Activated B cell treated with CpG ODN at 0.5 μM for 24 hours (primary cell): ENCODE measurements at regions of chr4 and their contacts with region 1.

Region 1: GRCh38 chr4:26583865-26584652 is at the start of gene TBC1D19:
- DNase-seq: peak; percentile 82
- ATAC-seq: peak; percentile 96
- H3K4me3 Mint-ChIP-seq: peak within 1 kb of the TSS; percentile 96
- H3K27ac Mint-ChIP-seq: peak within 1 kb of the TSS; percentile 93
- H3K4me1 Mint-ChIP-seq: peaks cover 24% of the 10 kb centered on the region
- H3K27me3 Mint-ChIP-seq: peaks cover under 1% of the 10 kb centered on the region
- CTCF ChIP-seq: no peak
- total RNA-seq, gene TBC1D19: 5.2 and 6.7 TPM in 2 replicates

Region 2: DNA sequence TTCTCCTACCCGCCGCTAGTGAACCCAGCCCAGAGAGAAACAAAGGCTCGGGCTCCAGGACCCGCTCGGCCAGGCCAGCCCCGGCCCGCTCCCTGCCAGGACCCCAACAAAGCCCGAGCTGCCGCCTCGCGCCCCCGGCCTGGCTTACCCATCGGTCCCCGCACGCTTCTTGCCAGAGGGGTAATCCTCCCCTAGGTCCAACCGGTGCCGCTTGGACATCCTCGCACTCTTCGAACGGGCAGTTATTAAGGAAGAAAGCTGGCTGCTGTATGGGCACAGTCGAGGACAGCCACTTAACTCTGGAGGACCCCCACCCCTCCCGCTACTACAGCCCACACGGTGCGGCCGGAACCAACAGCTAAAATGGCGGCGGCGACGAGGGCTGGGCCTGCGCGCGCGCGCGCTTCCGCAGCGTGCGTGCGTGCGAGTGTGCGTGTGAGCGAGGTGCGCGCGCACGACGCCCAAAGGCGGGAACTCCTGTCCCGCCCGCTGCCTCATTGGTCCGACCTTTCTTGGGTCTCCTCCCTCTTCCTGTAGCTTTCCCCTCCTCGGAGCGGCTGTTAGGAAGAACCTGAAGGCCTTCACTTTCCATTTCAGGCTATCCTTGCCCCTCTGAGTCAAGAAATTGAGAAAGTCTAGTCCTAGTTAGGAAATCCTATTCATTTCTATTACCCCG is 1999.7 kb before region 1 on chr4 and contains the start of gene DHX15:
- CTCF ChIA-PET with region 1: no interaction called
- POLR2A ChIA-PET with region 1: no interaction called
- intact Hi-C with region 1: loop called (anchors 5 kb)
- DNase-seq: peak; percentile 88
- ATAC-seq: peak; percentile 93
- H3K4me3 Mint-ChIP-seq: peak within 1 kb of the TSS; percentile 98
- H3K27ac Mint-ChIP-seq: peak within 1 kb of the TSS; percentile 91
- H3K4me1 Mint-ChIP-seq: peaks cover 39% of the 10 kb centered on the region
- H3K27me3 Mint-ChIP-seq: no peaks in the 10 kb centered on the region
- CTCF ChIP-seq: no peak
- total RNA-seq, gene DHX15: 145 and 163 TPM in 2 replicates

Region 3: GRCh38 chr4:25234390-25235370 is 1349.4 kb before region 1 on chr4:
- CTCF ChIA-PET with region 1: no interaction called
- POLR2A ChIA-PET with region 1: no interaction called
- intact Hi-C with region 1: loop called (anchors 5 kb)
- DNase-seq: no peak
- ATAC-seq: peak; percentile 53
- H3K4me3 Mint-ChIP-seq: peak overlapping the region; percentile 90
- H3K27ac Mint-ChIP-seq: peak overlapping the region; percentile 95
- H3K4me1 Mint-ChIP-seq: peaks cover 47% of the 10 kb centered on the region
- H3K27me3 Mint-ChIP-seq: no peaks in the 10 kb centered on the region
- CTCF ChIP-seq: no peak

Region 4: DNA sequence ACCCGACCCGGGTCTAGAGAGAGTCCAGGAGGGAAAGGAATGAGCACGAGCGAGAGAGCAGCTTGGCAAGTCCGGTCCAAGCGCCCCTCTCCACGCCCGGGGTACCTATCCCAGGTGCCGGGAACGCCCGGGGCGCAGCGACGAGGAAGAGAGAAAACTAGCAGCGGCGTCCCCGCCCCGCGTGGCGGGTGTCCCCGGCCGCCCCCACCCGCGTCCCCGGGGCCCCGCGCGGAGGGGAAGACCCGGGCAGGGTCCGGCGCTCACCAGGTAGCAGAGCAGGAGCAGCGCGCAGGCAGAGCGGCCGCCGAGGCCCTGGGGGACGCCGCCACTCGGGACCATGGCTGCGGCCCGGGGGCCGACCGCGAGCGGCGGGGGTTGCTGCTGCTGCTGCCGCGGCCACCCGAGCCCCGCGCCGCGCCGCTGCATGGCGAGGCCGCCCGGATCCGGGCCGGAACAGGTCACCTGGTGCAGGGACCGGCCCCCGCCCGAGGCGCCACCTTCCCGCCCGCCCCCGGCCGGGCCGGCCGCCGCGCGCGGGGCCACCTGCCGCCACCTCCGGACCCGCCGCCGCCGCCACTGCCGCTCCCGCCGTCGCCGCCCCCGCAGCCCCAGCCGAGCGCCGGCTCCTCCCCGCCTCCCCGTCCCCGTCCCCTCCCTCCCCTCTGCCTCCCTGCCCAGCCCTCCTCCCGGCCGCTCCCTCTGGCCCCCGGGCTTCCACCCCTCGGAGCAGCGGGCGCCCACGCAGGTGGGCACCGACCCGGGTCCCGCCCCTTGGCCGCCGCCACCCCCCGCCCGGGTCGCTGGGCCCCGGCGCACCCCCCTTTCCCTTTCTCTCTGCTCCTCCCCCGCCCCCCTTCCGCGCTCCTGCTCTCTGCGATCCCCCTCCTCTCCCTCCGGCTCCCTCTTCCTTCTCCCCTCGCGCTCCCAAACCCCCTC is 721.4 kb before region 1 on chr4 and contains the start of gene SEL1L3:
- CTCF ChIA-PET with region 1: no interaction called
- POLR2A ChIA-PET with region 1: no interaction called
- intact Hi-C with region 1: loop called (anchors 2 kb)
- DNase-seq: peak; percentile 68
- ATAC-seq: peak; percentile 39
- H3K4me3 Mint-ChIP-seq: peak within 1 kb of the TSS; percentile 98
- H3K27ac Mint-ChIP-seq: peak within 1 kb of the TSS; percentile 99
- H3K4me1 Mint-ChIP-seq: peaks cover 84% of the 10 kb centered on the region
- H3K27me3 Mint-ChIP-seq: no peaks in the 10 kb centered on the region
- CTCF ChIP-seq: no peak
- total RNA-seq, gene SEL1L3: 102 and 113 TPM in 2 replicates

Region 5: GRCh38 chr4:25986807-25987206 is 597.3 kb before region 1 on chr4:
- CTCF ChIA-PET with region 1: no interaction called
- POLR2A ChIA-PET with region 1: no interaction called
- intact Hi-C with region 1: loop called (anchors 5 kb)
- DNase-seq: no peak
- ATAC-seq: no peak
- H3K4me3 Mint-ChIP-seq: no peak overlapping the region
- H3K27ac Mint-ChIP-seq: no peak overlapping the region
- H3K4me1 Mint-ChIP-seq: peaks cover 16% of the 10 kb centered on the region
- H3K27me3 Mint-ChIP-seq: peaks cover 3% of the 10 kb centered on the region
- CTCF ChIP-seq: no peak

Region 6: GRCh38 chr4:26466578-26467270 is 117.3 kb before region 1 on chr4:
- CTCF ChIA-PET with region 1: no interaction called
- POLR2A ChIA-PET with region 1: no interaction called
- intact Hi-C with region 1: no loop called
- DNase-seq: no peak
- ATAC-seq: no peak
- H3K4me3 Mint-ChIP-seq: no peak overlapping the region
- H3K27ac Mint-ChIP-seq: no peak overlapping the region
- H3K4me1 Mint-ChIP-seq: no peaks in the 10 kb centered on the region
- H3K27me3 Mint-ChIP-seq: peaks cover 12% of the 10 kb centered on the region
- CTCF ChIP-seq: no peak

Region 7: GRCh38 chr4:26542991-26543390 is 41.1 kb before region 1 on chr4:
- CTCF ChIA-PET with region 1: no interaction called
- POLR2A ChIA-PET with region 1: no interaction called
- intact Hi-C with region 1: no loop called
- DNase-seq: no peak
- ATAC-seq: no peak
- H3K4me3 Mint-ChIP-seq: no peak overlapping the region
- H3K27ac Mint-ChIP-seq: no peak overlapping the region
- H3K4me1 Mint-ChIP-seq: no peaks in the 10 kb centered on the region
- H3K27me3 Mint-ChIP-seq: peaks cover 2% of the 10 kb centered on the region
- CTCF ChIP-seq: no peak

Region 8: DNA sequence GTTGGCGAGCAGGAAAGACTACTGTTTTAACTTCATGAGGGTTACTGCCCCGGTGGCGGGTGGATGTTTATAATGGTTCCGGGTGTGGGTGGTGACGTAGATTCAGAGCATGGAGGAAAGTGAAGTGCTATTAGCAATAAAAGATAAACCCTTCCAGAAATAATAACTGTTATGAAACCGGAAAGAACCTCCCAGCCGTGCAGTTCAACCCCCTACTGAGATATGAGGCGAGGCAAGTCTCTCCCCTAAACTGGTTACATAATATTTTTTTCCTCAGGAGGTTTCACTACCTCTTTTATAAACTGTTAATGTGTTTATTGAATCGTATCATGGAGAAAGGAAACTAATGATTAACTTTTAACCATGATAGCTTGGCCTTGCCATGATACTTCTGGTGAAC is 242.7 kb after region 1 on chr4:
- CTCF ChIA-PET with region 1: no interaction called
- POLR2A ChIA-PET with region 1: interaction called, 6 read pairs
- intact Hi-C with region 1: loop called (anchors 2 kb)
- DNase-seq: peak; percentile 47
- ATAC-seq: peak; percentile 84
- H3K4me3 Mint-ChIP-seq: peak overlapping the region; percentile 59
- H3K27ac Mint-ChIP-seq: peak overlapping the region; percentile 88
- H3K4me1 Mint-ChIP-seq: peaks cover 92% of the 10 kb centered on the region
- H3K27me3 Mint-ChIP-seq: peaks cover 9% of the 10 kb centered on the region
- CTCF ChIP-seq: no peak

Region 9: DNA sequence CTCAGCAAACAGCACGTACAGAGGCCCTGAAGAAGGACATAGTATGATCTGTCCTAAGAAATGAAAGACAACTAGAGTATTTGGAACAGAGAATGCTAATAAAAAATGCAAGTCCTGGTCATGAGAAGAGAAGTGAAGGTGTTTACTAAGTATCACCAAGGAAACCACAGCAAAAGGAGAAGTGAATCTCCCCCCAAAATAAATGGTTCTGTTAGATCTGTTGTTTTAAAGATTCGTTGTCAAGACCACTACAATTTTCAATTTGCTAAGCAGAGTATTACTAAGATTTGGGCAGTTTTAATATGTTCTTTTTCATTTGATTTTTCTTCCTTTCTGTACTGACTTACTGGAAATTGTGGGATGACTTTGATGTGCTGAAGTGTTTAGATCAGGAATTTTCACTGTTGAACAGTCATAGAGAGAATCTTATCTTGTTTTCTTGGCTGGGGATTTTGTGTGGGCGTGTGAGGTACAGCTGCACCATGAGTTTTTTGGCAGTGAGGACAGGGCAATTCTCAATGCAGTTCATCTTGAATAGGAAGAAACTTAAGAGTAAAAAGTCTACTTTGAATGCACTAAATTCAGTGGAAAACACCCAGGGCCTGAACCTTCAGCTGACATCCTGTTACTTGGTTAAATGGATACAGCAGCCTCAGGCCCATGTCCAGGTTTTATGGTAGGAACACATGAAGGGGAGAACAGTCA is 408.8 kb after region 1 on chr4:
- CTCF ChIA-PET with region 1: no interaction called
- POLR2A ChIA-PET with region 1: interaction called, 4 read pairs
- intact Hi-C with region 1: loop called (anchors 2 kb)
- DNase-seq: peak; percentile 26
- ATAC-seq: peak; percentile 80
- H3K4me3 Mint-ChIP-seq: no peak overlapping the region
- H3K27ac Mint-ChIP-seq: no peak overlapping the region
- H3K4me1 Mint-ChIP-seq: peaks cover 17% of the 10 kb centered on the region
- H3K27me3 Mint-ChIP-seq: no peaks in the 10 kb centered on the region
- CTCF ChIP-seq: no peak

Region 10: DNA sequence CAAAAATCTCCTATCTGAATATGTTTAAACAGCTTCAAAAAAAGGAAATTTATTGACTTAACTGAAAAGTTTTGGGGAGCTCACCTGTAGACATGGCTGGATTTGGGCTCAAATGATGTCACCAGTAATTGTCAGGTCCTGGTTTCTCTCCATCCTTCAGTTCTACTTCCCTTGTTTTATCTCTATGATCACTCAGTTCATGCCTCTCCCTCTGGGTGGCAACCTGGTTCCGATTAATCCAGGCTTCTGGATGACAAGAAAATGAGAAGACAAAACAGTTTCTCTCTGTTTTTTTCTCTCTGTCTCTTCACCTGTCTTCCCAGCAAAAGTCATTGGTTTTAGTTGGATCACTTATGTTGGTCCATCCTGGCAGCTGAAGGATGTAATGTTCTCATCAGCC is 554.1 kb after region 1 on chr4:
- CTCF ChIA-PET with region 1: no interaction called
- POLR2A ChIA-PET with region 1: no interaction called
- intact Hi-C with region 1: no loop called
- DNase-seq: no peak
- ATAC-seq: no peak
- H3K4me3 Mint-ChIP-seq: no peak overlapping the region
- H3K27ac Mint-ChIP-seq: no peak overlapping the region
- H3K4me1 Mint-ChIP-seq: no peaks in the 10 kb centered on the region
- H3K27me3 Mint-ChIP-seq: no peaks in the 10 kb centered on the region
- CTCF ChIP-seq: no peak